ENCODE measurements at regions of chr2 and their contacts with region 1.

Region 1: DNA sequence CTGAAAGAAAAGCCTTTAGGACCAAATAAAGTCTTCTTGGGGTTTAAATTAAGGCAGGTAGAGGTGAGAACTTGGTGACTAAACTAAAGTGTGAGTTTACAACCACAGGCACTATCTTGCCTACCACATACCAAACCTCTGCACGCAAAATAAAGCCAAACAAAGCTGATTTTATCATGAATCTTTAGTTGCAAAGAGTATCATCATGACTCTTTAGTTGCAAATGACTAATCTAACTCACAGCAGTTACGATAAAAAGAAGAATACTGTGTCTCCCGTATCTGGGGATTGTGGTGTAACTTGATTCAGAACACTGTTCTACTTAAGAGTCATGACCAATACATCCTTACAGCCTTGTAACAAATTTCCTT is 11.2 kb downstream of the CFAP210 start:
- DNase-seq: no peak
- H3K4me3 ChIP-seq: no peak overlapping the region
- H3K27ac ChIP-seq: no peak overlapping the region
- H3K4me1 ChIP-seq: no peaks in the 10 kb centered on the region
- H3K27me3 ChIP-seq: no peaks in the 10 kb centered on the region
- CTCF ChIP-seq: no peak
- EP300 ChIP-seq: no peak
- POLR2A ChIP-seq: no peak

Region 2: GRCh38 chr2:169653636-169654035 is 29.4 kb before region 1 on chr2:
- in situ Hi-C with region 1: no loop called
- intact Hi-C with region 1: no loop called
- DNase-seq: no peak
- H3K4me3 ChIP-seq: no peak overlapping the region
- H3K27ac ChIP-seq: no peak overlapping the region
- H3K4me1 ChIP-seq: no peaks in the 10 kb centered on the region
- H3K27me3 ChIP-seq: peaks cover 13% of the 10 kb centered on the region
- CTCF ChIP-seq: no peak
- EP300 ChIP-seq: no peak
- POLR2A ChIP-seq: no peak

Region 3: GRCh38 chr2:169704160-169704708 is 21.2 kb after region 1 on chr2:
- in situ Hi-C with region 1: no loop called
- intact Hi-C with region 1: loop called (anchors 1 kb)
- DNase-seq: no peak
- H3K4me3 ChIP-seq: no peak overlapping the region
- H3K27ac ChIP-seq: peak overlapping the region in 3 of 4 donors; percentile 56 to 62 (median 58)
- H3K4me1 ChIP-seq: peaks cover 0 to 25% (median 12%) of the 10 kb centered on the region in 4 donors
- H3K27me3 ChIP-seq: no peaks in the 10 kb centered on the region
- CTCF ChIP-seq: no peak
- EP300 ChIP-seq: no peak
- POLR2A ChIP-seq: no peak

Measured in transverse colon (tissue), 4 donors.